ENCODE measurements at regions of chr5 and their contacts with region 1.

Region 1: GRCh38 chr5:95961617-95962474 is at the start of gene ELL2:
- DNase-seq: peak; percentile 98
- H3K4me3 Mint-ChIP-seq: peak within 1 kb of the TSS; percentile 93
- H3K27ac Mint-ChIP-seq: peak within 1 kb of the TSS; percentile 89
- H3K4me1 Mint-ChIP-seq: peaks cover 40% of the 10 kb centered on the region
- H3K27me3 Mint-ChIP-seq: no peaks in the 10 kb centered on the region
- total RNA-seq, gene ELL2: 75.0 to 78.6 TPM

Region 2: DNA sequence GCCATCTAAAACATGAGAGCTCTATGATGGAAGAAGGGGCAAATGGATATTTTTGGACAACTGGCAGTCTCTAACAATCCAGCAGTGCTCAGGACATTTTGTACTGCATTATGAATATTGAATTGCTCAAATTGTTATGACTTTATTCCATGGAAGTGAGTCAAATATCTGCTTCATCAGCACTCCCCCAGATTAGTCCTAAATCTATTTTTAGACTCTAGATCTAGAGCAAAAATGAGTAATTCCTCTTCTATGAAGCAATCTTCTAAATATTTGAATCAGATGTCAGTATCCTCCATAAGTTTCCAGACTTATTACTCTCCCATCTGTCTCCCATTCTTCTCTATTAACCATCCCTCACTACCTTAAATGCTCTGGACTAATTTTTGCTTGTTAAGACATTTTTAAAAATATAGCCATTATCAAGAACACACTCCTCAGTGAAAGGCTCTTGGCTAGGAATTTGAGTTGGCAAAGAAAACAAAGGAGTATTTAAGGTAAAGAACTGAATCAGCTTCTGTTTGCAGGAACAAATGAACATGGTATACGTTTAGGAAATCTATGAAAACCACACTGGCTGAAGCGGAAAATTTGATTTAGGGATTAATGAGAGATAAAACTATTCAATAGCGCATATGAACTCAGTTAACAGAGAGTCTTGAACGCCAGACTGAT is 977.8 kb before region 1 on chr5:
- CTCF ChIA-PET with region 1: no interaction called
- intact Hi-C with region 1: no loop called
- DNase-seq: no peak
- H3K4me3 Mint-ChIP-seq: no peak overlapping the region
- H3K27ac Mint-ChIP-seq: no peak overlapping the region
- H3K4me1 Mint-ChIP-seq: no peaks in the 10 kb centered on the region
- H3K27me3 Mint-ChIP-seq: no peaks in the 10 kb centered on the region

Region 3: DNA sequence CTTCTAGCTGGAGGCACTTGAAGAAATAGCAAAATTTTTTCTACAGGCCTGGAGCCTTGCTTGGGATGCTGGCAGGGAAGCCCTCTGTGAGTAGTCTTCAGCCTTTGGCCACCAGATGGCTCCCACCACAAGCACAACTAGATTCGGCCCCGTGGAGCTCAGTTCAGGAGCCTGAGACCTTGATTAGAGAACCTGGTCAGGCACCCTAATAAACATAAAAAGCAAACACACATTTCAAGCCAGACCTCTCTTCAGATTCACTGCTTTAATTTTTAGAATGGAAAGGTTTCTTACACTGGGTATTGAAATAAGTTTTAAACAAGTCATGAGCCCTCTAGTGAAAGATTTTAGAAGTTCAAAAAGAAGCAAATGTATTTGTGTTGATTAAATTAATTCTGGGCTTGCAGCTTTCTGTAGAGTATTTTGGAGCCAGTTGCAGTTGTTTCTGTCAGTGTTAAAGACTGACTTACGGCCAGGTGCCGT is 180.7 kb before region 1 on chr5:
- CTCF ChIA-PET with region 1: no interaction called
- intact Hi-C with region 1: loop called (anchors 1 kb)
- DNase-seq: peak; percentile 86
- H3K4me3 Mint-ChIP-seq: peak overlapping the region; percentile 44
- H3K27ac Mint-ChIP-seq: peak overlapping the region; percentile 48
- H3K4me1 Mint-ChIP-seq: peaks cover 3% of the 10 kb centered on the region
- H3K27me3 Mint-ChIP-seq: no peaks in the 10 kb centered on the region

Region 4: GRCh38 chr5:95927927-95928723 is 33.7 kb before region 1 on chr5:
- CTCF ChIA-PET with region 1: no interaction called
- intact Hi-C with region 1: no loop called
- DNase-seq: no peak
- H3K4me3 Mint-ChIP-seq: no peak overlapping the region
- H3K27ac Mint-ChIP-seq: peak overlapping the region; percentile 59
- H3K4me1 Mint-ChIP-seq: peaks cover 21% of the 10 kb centered on the region
- H3K27me3 Mint-ChIP-seq: no peaks in the 10 kb centered on the region

Region 5: GRCh38 chr5:96065577-96066385 is 103.9 kb after region 1 on chr5:
- CTCF ChIA-PET with region 1: interaction called, 3 read pairs
- intact Hi-C with region 1: loop called (anchors 1 kb)
- DNase-seq: peak; percentile 37
- H3K4me3 Mint-ChIP-seq: no peak overlapping the region
- H3K27ac Mint-ChIP-seq: peak overlapping the region; percentile 59
- H3K4me1 Mint-ChIP-seq: peaks cover 31% of the 10 kb centered on the region
- H3K27me3 Mint-ChIP-seq: no peaks in the 10 kb centered on the region

Region 6: DNA sequence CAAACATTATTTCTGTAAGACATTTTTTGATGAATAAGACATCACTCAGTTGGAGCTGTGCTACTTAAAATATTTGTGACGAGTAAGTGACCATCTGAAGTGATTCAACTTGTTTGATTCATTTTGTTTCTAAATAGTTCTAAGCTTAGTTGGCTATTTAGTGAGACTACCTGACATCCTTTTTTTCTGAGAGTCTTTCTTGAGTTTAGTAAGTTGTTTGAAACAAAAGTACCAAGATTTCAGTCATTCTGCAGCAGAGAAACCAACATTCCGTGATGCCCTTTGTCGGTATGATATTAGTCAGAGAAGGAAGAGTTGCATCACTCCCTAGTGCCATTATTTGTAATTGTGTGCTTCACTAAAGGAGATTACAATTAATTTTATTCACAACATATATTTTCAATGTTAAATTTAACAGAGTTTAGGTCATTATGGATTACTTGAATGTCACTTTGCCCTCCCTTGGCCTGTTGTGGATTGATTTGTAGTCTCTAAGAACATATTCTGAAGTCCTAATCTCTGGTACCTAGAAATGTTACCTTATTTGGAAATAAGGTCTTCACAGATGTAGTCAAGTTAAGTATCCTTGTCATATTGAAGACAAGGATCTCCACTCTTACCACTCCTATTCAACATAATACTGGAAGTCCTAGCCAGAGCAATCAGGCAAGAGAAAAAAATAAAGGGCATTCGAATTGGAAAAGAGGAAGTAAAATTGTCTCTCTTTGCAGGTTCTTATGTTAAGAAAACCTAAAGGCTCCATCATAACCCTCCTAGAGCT is 259.0 kb after region 1 on chr5:
- CTCF ChIA-PET with region 1: no interaction called
- intact Hi-C with region 1: loop called (anchors 1 kb)
- DNase-seq: peak; percentile 22
- H3K4me3 Mint-ChIP-seq: no peak overlapping the region
- H3K27ac Mint-ChIP-seq: no peak overlapping the region
- H3K4me1 Mint-ChIP-seq: peaks cover 11% of the 10 kb centered on the region
- H3K27me3 Mint-ChIP-seq: peaks cover 16% of the 10 kb centered on the region

Region 7: GRCh38 chr5:96601811-96602244 is 640.0 kb after region 1 on chr5:
- CTCF ChIA-PET with region 1: interaction called, 4 read pairs
- intact Hi-C with region 1: loop called (anchors 2 kb)
- DNase-seq: peak; percentile 68
- H3K4me3 Mint-ChIP-seq: no peak overlapping the region
- H3K27ac Mint-ChIP-seq: no peak overlapping the region
- H3K4me1 Mint-ChIP-seq: peaks cover 10% of the 10 kb centered on the region
- H3K27me3 Mint-ChIP-seq: peaks cover 5% of the 10 kb centered on the region

Region 8: DNA sequence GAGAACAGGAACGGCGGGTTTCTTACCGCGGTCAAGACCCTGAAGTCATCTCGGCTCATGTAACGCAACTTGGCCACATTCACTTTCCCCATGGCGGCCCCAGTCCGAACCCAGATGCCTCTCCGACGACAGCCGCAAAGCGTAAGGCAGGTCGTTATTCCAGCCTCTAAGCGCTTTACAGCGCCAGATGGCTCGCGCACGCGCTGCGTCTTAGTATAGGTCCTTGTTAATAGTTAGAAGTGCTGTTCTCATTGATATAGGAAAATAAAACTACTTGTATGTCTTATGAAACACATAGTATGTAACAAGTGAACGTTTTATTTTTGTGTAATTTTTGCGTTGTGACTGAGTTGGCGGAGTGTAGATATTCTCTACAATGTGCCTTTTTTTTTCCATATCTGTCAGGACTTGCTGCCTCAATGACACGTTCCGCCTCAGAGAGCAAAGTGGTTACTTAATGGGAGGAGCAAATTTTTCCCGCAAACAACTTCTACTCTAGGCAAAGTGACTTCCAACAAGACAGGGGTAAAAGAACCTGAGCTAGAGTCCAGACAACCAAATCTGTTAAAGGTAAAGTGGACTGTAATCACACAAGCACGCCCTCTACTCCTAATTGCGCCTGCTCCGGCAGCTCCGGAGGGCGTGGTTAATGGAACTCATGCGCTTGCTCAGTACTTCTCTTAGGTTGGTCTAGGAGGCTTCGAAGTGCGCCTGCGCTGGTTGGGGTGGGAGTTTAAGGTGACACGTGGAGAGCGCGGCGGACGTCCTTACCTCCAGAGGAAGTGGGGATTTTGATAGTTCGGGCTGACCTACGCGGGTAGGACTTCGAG is 1221.5 kb after region 1 on chr5 and contains the start of gene RIOK2:
- CTCF ChIA-PET with region 1: no interaction called
- intact Hi-C with region 1: loop called (anchors 10 kb)
- DNase-seq: peak; percentile 97
- H3K4me3 Mint-ChIP-seq: peak within 1 kb of the TSS; percentile 93
- H3K27ac Mint-ChIP-seq: peak within 1 kb of the TSS; percentile 99
- H3K4me1 Mint-ChIP-seq: peaks cover 33% of the 10 kb centered on the region
- H3K27me3 Mint-ChIP-seq: no peaks in the 10 kb centered on the region
- total RNA-seq, gene RIOK2: 29.1 to 32.0 TPM

Measured in activated naive CD4-positive, alpha-beta T cell treated with anti-CD3 and anti-CD28 coated beads for 36 hours (primary cell).